ENCODE measurements at regions of chr11 and their contacts with region 1.

Region 1: GRCh38 chr11:112219476-112220232 is 6.6 kb upstream of the PTS start:
- DNase-seq: peak; percentile 39 to 72
- ATAC-seq: peak; percentile 97 to 99
- H3K4me3 ChIP-seq: no peak overlapping the region
- H3K27ac ChIP-seq: no peak overlapping the region
- H3K4me1 ChIP-seq: 0 out of 3 replicates have a peak, but pooled peaks cover 8% of the 10 kb centered on the region
- CTCF ChIP-seq: peak; percentile 71
- EP300 ChIP-seq: no peak
- POLR2A ChIP-seq: no peak
- RAD21 ChIP-seq: peak; percentile 85

Region 2: DNA sequence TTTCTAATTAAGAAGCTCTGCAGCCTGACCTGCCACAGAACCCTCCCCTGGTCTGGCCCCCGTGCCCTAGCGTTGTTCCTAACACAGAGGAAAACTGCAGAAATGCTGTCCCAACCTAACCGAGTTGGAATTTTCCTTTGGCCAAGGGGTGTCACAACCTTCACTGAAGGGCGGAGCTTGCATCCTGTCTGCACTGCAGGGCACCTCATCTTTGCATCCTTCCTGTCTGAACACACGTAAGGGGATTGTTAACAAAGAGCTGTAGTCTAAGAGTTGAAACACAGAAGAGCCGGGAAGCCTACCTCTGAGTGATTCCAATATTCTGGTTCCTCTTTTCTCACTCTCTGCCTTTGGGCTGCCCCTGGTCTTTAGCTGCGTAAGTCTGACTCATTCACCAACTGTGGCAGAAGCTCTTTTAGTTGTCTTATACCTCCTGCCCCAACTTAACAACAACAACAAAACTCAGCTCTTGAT is 280.9 kb before region 1 on chr11:
- CTCF ChIA-PET with region 1: no interaction called
- POLR2A ChIA-PET with region 1: no interaction called
- DNase-seq: no peak
- ATAC-seq: peak; percentile 37 to 45; a peak in 4 of 6 replicates
- H3K4me3 ChIP-seq: peak overlapping the region; percentile 71
- H3K27ac ChIP-seq: peak overlapping the region; percentile 89 to 95
- H3K4me1 ChIP-seq: peaks cover 81% of the 10 kb centered on the region
- CTCF ChIP-seq: no peak
- EP300 ChIP-seq: no peak
- POLR2A ChIP-seq: no peak
- RAD21 ChIP-seq: no peak

Region 3: DNA sequence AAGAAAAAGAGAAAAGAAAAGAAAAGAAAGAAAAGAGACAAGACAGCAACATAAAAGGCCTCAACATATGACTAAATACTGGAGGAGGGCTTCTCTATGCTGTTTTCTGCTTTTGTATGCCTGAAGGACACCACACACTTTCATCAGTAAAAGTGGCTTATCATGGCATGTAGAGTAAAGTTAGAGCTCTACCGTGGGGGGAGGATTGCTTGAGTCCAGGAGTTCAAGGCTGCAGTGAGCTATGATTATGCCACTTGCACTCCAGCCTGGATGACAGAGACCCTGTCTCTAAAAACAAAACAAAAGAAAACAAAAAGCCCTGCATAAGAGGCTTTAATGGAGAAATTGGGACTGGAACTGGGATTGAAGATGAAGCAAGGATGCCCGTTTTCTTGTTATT is 12.3 kb after region 1 on chr11:
- CTCF ChIA-PET with region 1: interaction called, 13 read pairs
- POLR2A ChIA-PET with region 1: no interaction called
- DNase-seq: no peak
- ATAC-seq: no peak
- H3K4me3 ChIP-seq: no peak overlapping the region
- H3K27ac ChIP-seq: no peak overlapping the region
- H3K4me1 ChIP-seq: peaks cover 12% of the 10 kb centered on the region
- CTCF ChIP-seq: no peak
- EP300 ChIP-seq: no peak
- POLR2A ChIP-seq: no peak
- RAD21 ChIP-seq: no peak

Region 4: GRCh38 chr11:112265721-112266409 is 46.2 kb after region 1 on chr11:
- CTCF ChIA-PET with region 1: interaction called, 19 read pairs
- POLR2A ChIA-PET with region 1: no interaction called
- DNase-seq: no peak
- ATAC-seq: no peak
- H3K4me3 ChIP-seq: no peak overlapping the region
- H3K27ac ChIP-seq: no peak overlapping the region
- H3K4me1 ChIP-seq: no peaks in the 10 kb centered on the region
- CTCF ChIP-seq: no peak
- EP300 ChIP-seq: no peak
- POLR2A ChIP-seq: no peak
- RAD21 ChIP-seq: no peak

Region 5: GRCh38 chr11:112280268-112281126 is 60.8 kb after region 1 on chr11:
- CTCF ChIA-PET with region 1: interaction called, 247 read pairs
- POLR2A ChIA-PET with region 1: interaction called, 3 read pairs
- DNase-seq: peak; percentile 68 to 79
- ATAC-seq: peak; percentile 86 to 96
- H3K4me3 ChIP-seq: peak overlapping the region; percentile 52
- H3K27ac ChIP-seq: peak overlapping the region; percentile 66 to 78
- H3K4me1 ChIP-seq: no peaks in the 10 kb centered on the region
- CTCF ChIP-seq: peak; percentile 45
- EP300 ChIP-seq: no peak
- POLR2A ChIP-seq: no peak
- RAD21 ChIP-seq: peak; percentile 60 to 75

Region 6: DNA sequence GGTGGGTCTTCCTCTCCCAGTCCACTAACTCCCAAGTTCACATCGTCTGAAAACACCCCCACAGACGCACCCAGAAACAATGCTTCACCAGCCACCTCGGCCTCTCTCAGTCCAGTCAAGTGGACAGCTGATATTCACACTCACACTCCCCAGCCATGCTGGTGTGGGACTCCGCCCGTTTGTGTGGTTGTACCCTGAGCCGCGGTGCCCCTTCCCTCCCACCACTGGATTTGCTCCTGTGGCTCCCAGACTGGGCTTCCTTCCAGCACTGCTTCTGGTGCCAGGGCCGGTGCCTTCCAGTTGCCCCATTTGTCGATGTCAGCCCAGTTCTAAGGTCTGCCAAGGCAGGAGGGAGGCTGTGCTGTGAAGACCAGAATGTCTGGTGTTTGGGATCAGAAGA is 78.9 kb after region 1 on chr11:
- CTCF ChIA-PET with region 1: no interaction called
- POLR2A ChIA-PET with region 1: no interaction called
- DNase-seq: no peak
- ATAC-seq: no peak
- H3K4me3 ChIP-seq: no peak overlapping the region
- H3K27ac ChIP-seq: no peak overlapping the region
- H3K4me1 ChIP-seq: peaks cover 24% of the 10 kb centered on the region
- CTCF ChIP-seq: no peak
- EP300 ChIP-seq: no peak
- POLR2A ChIP-seq: no peak
- RAD21 ChIP-seq: no peak

Region 7: GRCh38 chr11:113849713-113850112 is 1630.1 kb after region 1 on chr11:
- CTCF ChIA-PET with region 1: no interaction called
- POLR2A ChIA-PET with region 1: no interaction called
- DNase-seq: no peak
- ATAC-seq: no peak
- H3K4me3 ChIP-seq: no peak overlapping the region
- H3K27ac ChIP-seq: no peak overlapping the region
- H3K4me1 ChIP-seq: no peaks in the 10 kb centered on the region
- CTCF ChIP-seq: no peak
- EP300 ChIP-seq: no peak
- POLR2A ChIP-seq: no peak
- RAD21 ChIP-seq: no peak